Endothelial cell of umbilical vein (primary cell): ENCODE measurements at regions of chrX and their contacts with region 1.

Region 1: DNA sequence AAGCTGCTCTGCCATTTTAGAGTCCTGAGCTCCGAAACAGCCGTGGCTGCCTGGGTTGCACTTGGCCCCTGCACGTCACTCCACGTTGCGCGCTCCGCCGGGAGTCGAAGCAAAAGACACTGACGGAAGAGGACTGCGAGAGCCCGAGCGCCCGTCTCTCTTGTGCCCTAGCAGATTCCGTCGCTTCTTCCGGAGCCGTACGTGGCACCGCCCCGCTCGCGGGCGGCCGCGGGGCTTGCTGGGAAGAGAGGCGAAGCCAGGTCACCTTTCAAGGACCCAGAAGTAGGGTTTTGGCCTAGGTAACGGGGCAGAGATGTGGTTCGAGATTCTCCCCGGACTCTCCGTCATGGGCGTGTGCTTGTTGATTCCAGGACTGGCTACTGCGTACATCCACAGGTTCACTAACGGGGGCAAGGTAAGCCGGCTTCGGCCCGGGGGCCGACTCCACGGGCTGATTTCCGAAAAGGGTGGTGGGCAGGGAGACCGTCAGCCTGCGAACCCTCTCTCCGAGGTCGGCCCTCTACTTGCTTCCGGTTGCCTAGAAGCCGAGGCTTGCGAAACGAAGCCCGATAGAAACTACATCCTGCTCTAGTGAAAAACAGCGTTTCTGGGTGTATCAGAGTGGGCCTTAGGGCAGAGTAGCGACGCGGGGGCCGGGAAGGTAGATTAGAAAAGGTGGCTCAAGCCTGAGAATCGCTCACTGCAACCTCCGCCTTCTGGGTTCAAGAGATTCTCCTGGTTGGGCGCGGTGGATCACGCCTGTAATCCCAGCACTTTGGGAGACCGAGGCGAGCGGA is at the starts of genes NDUFA1 and RNF113A:
- DNase-seq: peak; percentile 69
- H3K4me3 ChIP-seq: peak within 1 kb of the TSS; percentile 74 to 93 (median 84)
- H3K27ac ChIP-seq: peak within 1 kb of the TSS; percentile 87
- H3K4me1 ChIP-seq: peaks cover 11% of the 10 kb centered on the region
- H3K27me3 ChIP-seq: no peaks in the 10 kb centered on the region
- CTCF ChIP-seq: no peak
- POLR2A ChIP-seq: peak; percentile 80
- total RNA-seq, gene NDUFA1: 89.9 and 96.3 TPM in 2 replicates
- total RNA-seq, gene RNF113A: 10.2 and 11.7 TPM in 2 replicates

Region 2: DNA sequence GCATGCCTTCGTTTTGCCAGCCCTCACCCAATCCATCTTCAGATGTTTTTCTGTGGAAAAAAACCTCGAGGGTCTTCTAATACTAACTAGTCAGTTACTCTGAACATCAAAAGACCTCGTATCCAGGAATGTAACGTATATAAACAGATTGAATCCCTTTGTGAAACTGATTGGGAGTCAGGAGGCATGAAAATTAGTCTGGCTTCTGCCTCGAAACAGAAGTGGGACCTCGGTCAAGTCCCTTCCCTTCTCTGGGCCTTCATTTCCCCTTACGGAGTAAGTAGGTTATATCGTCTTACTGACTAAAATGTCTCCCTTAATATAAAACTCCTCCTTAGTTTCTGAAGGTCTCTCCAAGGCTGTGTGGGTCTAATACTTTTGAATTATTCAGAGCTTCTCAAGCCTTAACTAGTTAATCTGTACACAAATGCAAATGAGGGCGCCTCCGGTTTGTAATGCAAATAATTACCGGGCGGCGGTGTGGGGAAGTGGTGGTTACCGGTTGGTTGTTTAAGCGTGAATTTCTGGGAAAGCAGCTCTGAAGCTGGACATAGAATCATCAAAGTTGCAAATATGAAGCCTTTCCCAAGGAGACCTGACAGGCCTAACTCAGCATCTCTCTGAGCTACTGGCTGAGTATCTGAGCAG is 254.2 kb before region 1 on chrX:
- CTCF ChIA-PET with region 1: no interaction called
- POLR2A ChIA-PET with region 1: no interaction called
- dilution Hi-C with region 1: no loop called
- intact Hi-C with region 1: loop called (anchors 5 kb)
- DNase-seq: no peak
- H3K4me3 ChIP-seq: no peak overlapping the region
- H3K27ac ChIP-seq: no peak overlapping the region
- H3K4me1 ChIP-seq: peaks cover 7% of the 10 kb centered on the region
- H3K27me3 ChIP-seq: no peaks in the 10 kb centered on the region
- CTCF ChIP-seq: no peak
- POLR2A ChIP-seq: no peak

Region 3: DNA sequence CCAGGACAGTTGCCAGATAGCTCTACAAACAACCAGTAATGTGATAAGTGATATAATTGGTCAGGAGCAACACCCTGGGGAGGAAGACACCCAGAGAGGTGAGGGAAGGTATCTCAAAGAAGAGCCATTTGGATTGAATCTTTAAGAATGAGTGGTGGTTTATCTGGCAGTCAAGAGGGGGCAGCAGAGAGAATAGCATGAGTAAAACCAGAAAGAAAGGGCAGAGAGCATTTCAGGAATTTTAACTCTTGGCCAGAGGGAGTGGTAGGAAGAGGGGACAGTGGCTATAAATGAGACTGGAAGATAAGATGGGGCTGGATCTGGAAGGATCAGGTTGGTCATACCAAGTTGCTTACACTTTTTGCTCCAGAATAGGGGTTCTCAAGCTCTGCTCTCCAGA is 173.0 kb before region 1 on chrX:
- CTCF ChIA-PET with region 1: no interaction called
- POLR2A ChIA-PET with region 1: no interaction called
- dilution Hi-C with region 1: no loop called
- intact Hi-C with region 1: loop called (anchors 5 kb)
- DNase-seq: peak; percentile 47
- H3K4me3 ChIP-seq: no peak overlapping the region
- H3K27ac ChIP-seq: no peak overlapping the region
- H3K4me1 ChIP-seq: no peaks in the 10 kb centered on the region
- H3K27me3 ChIP-seq: no peaks in the 10 kb centered on the region
- CTCF ChIP-seq: peak; percentile 19 to 43
- POLR2A ChIP-seq: no peak

Region 4: DNA sequence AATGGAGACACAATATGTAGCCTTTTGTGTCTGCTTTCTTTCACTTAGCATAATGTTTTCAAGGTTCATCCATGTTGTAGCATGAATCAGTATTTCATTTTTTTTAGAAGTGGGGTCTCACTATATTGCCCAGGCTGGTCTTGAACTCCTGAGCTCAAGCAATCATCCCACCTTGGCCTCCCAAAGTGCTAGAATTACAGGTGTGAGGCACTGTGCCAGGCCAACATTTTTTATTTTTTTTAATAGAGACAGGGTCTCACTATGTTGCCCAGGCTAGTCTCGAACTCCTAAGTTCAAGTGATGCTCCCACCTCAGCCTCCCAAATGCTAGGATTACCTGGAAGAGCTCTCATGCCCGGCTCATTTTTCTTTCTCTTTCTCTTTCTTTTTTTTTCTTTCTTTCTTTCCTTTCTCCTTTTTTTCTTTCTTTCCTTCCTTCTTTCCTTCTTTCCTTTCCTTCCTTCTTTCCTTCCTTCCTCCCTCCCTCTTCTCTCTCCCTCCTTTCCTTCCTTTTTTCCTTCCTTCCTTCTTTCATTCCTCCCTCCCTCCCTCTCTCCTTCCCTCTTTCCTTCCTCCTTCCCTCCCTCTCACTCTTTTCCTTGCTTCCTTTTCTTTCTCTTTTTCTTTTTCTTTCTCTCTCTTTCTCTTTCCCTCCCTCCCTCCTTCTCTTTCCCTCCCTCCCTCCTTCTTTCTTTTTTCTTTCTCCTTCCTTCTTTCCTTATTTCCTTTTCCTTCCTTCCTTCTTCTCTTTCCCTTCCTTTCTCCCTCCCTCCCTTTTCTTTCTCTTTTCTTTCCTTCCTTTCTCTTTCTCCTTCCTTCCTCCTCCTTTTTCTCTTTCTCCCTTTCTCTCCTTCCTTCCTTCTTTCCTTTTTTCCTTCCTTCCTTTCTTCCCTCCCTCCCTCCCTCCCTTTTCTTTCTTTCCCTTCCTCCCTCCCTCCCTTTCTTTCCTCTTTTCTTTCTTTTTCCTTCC is 70.3 kb before region 1 on chrX:
- CTCF ChIA-PET with region 1: no interaction called
- POLR2A ChIA-PET with region 1: no interaction called
- dilution Hi-C with region 1: no loop called
- intact Hi-C with region 1: no loop called
- DNase-seq: no peak
- H3K4me3 ChIP-seq: no peak overlapping the region
- H3K27ac ChIP-seq: no peak overlapping the region
- H3K4me1 ChIP-seq: no peaks in the 10 kb centered on the region
- H3K27me3 ChIP-seq: no peaks in the 10 kb centered on the region
- CTCF ChIP-seq: no peak
- POLR2A ChIP-seq: no peak

Region 5: GRCh38 chrX:119852382-119853353 is 19.1 kb before region 1 on chrX and contains the start of gene UPF3B:
- CTCF ChIA-PET with region 1: interaction called, 8 read pairs
- POLR2A ChIA-PET with region 1: interaction called, 4 read pairs
- dilution Hi-C with region 1: no loop called
- intact Hi-C with region 1: loop called (anchors 1 kb)
- DNase-seq: peak; percentile 97
- H3K4me3 ChIP-seq: peak within 1 kb of the TSS; percentile 86 to 89 (median 89)
- H3K27ac ChIP-seq: peak within 1 kb of the TSS; percentile 76
- H3K4me1 ChIP-seq: peaks cover 6% of the 10 kb centered on the region
- H3K27me3 ChIP-seq: no peaks in the 10 kb centered on the region
- CTCF ChIP-seq: no peak
- POLR2A ChIP-seq: peak; percentile 70
- total RNA-seq, gene UPF3B: 10.2 and 11.9 TPM in 2 replicates

Region 6: DNA sequence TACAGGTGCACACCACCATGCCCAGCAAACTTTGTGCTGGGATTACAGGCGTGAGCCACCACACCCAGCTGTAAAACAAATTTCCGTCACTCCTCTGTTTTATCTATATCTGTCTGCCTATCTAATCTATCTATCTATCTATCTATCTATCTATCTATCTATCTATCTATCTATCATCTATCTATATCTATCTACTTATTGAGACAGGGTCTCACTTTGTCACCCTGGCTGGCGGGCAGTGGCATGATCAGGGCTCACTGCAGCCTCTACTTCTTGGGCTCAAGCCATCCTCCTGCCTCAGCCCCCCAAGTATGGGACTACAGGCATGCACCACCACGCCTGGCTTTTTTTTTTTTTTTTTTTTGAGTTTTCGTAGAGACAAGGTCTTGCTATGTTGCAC is 44.5 kb after region 1 on chrX:
- CTCF ChIA-PET with region 1: no interaction called
- POLR2A ChIA-PET with region 1: no interaction called
- dilution Hi-C with region 1: no loop called
- intact Hi-C with region 1: no loop called
- DNase-seq: no peak
- H3K4me3 ChIP-seq: no peak overlapping the region
- H3K27ac ChIP-seq: no peak overlapping the region
- H3K4me1 ChIP-seq: no peaks in the 10 kb centered on the region
- H3K27me3 ChIP-seq: no peaks in the 10 kb centered on the region
- CTCF ChIP-seq: no peak
- POLR2A ChIP-seq: no peak

Region 7: DNA sequence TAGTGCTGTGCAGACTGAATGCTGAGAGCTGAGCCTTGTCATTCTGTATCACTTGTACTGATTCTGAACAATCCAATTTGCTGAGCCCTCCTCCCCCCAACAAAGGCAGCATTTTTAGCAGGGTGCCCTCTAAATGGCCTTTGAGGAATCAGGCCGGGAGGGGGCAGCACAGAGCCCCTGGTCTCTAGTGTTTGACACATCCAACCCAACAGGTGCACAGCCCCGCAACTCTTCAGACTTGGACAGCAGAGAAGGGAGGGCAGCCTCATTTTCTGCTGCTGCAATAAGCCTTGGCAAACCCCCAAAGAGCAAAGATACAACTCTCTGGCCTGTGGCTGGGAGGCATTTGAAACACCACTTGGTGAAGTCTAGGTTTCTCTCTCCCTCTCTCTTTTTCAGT is 493.5 kb after region 1 on chrX:
- CTCF ChIA-PET with region 1: no interaction called
- POLR2A ChIA-PET with region 1: no interaction called
- dilution Hi-C with region 1: no loop called
- intact Hi-C with region 1: no loop called
- DNase-seq: peak; percentile 13
- H3K4me3 ChIP-seq: no peak overlapping the region
- H3K27ac ChIP-seq: no peak overlapping the region
- H3K4me1 ChIP-seq: no peaks in the 10 kb centered on the region
- H3K27me3 ChIP-seq: no peaks in the 10 kb centered on the region
- CTCF ChIP-seq: peak; percentile 27 to 58
- POLR2A ChIP-seq: no peak